Heart left ventricle (tissue), 16 donors: ENCODE measurements at regions of chrX and their contacts with region 1.

Region 1: GRCh38 chrX:21985332-21985777 is 44.8 kb downstream of the SMS start:
- DNase-seq: peak in 4 of 5 donors; percentile 26 to 50 (median 40)
- ATAC-seq: peak; percentile 71 to 93 (median 87)
- H3K4me3 ChIP-seq: no peak overlapping the region
- H3K27ac ChIP-seq: no peak overlapping the region
- H3K4me1 ChIP-seq: no peaks in the 10 kb centered on the region
- H3K27me3 ChIP-seq: no peaks in the 10 kb centered on the region
- CTCF ChIP-seq: peak; percentile 60 to 93 (median 82)
- POLR2A ChIP-seq: no peak

Region 2: GRCh38 chrX:22192417-22193060 is 207.2 kb after region 1 on chrX:
- intact Hi-C with region 1: loop called in 3 of 10 experiments (anchors 5 to 10 kb)
- DNase-seq: peak; percentile 37 to 67 (median 56)
- ATAC-seq: peak in 3 of 4 donors; percentile 53 to 81 (median 80)
- H3K4me3 ChIP-seq: no peak overlapping the region
- H3K27ac ChIP-seq: no peak overlapping the region
- H3K4me1 ChIP-seq: peaks cover 0 to 4% (median 0%) of the 10 kb centered on the region in 12 donors
- H3K27me3 ChIP-seq: peaks cover 0 to 8% (median 0%) of the 10 kb centered on the region in 9 donors
- CTCF ChIP-seq: peak; percentile 48 to 84 (median 66)
- POLR2A ChIP-seq: no peak

Region 3: GRCh38 chrX:22748093-22748999 is 763.0 kb after region 1 on chrX:
- intact Hi-C with region 1: loop called in 2 of 10 experiments (anchors 5 kb)
- DNase-seq: peak in 3 of 5 donors; percentile 10 to 26 (median 24)
- ATAC-seq: peak; percentile 61 to 90 (median 84)
- H3K4me3 ChIP-seq: no peak overlapping the region
- H3K27ac ChIP-seq: no peak overlapping the region
- H3K4me1 ChIP-seq: no peaks in the 10 kb centered on the region
- H3K27me3 ChIP-seq: peaks cover 0 to 5% (median 0%) of the 10 kb centered on the region in 9 donors
- CTCF ChIP-seq: peak; percentile 34 to 79 (median 60)
- POLR2A ChIP-seq: no peak

Region 4: GRCh38 chrX:23554304-23554703 is 1568.9 kb after region 1 on chrX:
- intact Hi-C with region 1: loop called in 1 of 10 experiments (anchors 10 kb)
- DNase-seq: no peak
- ATAC-seq: no peak
- H3K4me3 ChIP-seq: no peak overlapping the region
- H3K27ac ChIP-seq: no peak overlapping the region
- H3K4me1 ChIP-seq: no peaks in the 10 kb centered on the region
- H3K27me3 ChIP-seq: peaks cover 0 to 13% (median 0%) of the 10 kb centered on the region in 9 donors
- CTCF ChIP-seq: peak in 11 of 12 donors; percentile 25 to 56 (median 45)
- POLR2A ChIP-seq: no peak

Region 5: GRCh38 chrX:23616361-23616760 is 1631.0 kb after region 1 on chrX:
- intact Hi-C with region 1: loop called in 4 of 10 experiments (anchors 5 to 10 kb)
- DNase-seq: no peak
- ATAC-seq: no peak
- H3K4me3 ChIP-seq: no peak overlapping the region
- H3K27ac ChIP-seq: no peak overlapping the region
- H3K4me1 ChIP-seq: no peaks in the 10 kb centered on the region
- H3K27me3 ChIP-seq: no peaks in the 10 kb centered on the region
- CTCF ChIP-seq: peak in 11 of 12 donors; percentile 24 to 60 (median 50)
- POLR2A ChIP-seq: no peak

Region 6: DNA sequence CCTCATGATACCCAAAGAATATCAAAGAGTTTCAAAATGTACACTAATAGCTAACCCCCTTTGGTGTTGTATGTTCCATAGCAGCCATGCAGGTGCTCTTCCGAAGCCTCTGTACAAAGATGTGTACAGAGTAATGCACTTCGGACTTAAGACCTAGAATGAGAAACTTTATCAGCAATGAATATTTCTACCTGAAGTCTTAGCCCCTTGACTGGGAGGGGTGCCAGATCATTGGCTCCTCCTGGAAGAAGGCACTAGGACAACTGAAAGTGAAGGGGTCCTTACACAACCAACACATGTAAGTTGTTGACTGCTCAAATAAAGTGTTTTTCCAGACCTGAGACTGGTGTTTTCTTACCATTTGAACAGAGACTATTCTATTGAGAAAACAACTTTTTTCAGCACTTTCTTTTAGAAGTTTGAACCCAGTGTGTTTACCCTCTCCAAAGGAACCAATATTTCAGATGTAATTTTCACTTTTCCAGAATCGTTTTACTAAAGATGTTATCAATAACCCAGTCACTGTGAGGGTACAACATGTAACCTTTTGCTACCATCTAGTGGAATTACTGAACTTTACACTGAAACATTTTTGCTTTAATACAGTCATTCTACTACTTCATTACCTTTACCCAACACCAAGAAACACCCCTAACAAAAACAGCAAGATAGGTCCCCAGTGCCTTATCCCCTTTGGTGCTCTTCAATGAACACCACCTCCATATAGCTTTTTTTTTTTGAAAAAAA is 1648.7 kb after region 1 on chrX:
- intact Hi-C with region 1: loop called in 1 of 10 experiments (anchors 5 kb)
- DNase-seq: no peak
- ATAC-seq: no peak
- H3K4me3 ChIP-seq: no peak overlapping the region
- H3K27ac ChIP-seq: no peak overlapping the region
- H3K4me1 ChIP-seq: no peaks in the 10 kb centered on the region
- H3K27me3 ChIP-seq: peaks cover 0 to 4% (median 0%) of the 10 kb centered on the region in 9 donors
- CTCF ChIP-seq: no peak
- POLR2A ChIP-seq: no peak